Sciatic nerve (tissue), 2 donors: ENCODE measurements at regions of chr5 and their contacts with region 1.

Region 1: GRCh38 chr5:143448518-143448917 is 45.0 kb upstream of the NR3C1 start:
- DNase-seq: no peak
- ATAC-seq: no peak

Region 2: DNA sequence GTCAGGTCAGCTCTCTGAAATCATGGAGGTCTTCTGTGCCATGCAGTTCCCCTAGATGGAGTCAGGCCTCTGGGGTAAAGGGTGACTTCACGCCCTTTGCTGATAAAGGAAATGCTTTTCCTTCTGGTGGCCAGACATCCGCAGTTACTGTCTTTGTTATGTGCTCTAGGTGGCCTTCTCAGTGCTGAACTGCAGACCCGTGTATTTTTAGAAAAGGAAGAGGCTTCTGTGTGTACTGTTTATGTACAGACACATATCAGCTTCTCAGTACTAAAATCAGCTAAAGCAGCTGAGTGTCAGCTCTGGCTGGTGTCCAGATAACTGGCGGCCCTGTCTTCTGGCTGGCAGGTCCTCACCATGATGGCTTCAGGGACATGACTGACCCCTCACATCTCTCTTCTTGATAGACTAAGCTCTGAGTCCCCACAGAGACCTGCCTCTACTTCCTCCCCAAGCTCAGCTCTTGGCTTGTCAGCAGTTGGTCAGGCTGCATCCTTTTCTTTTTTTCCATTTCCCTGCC is 603.1 kb before region 1 on chr5:
- intact Hi-C with region 1: no loop called
- DNase-seq: no peak
- ATAC-seq: no peak

Region 3: DNA sequence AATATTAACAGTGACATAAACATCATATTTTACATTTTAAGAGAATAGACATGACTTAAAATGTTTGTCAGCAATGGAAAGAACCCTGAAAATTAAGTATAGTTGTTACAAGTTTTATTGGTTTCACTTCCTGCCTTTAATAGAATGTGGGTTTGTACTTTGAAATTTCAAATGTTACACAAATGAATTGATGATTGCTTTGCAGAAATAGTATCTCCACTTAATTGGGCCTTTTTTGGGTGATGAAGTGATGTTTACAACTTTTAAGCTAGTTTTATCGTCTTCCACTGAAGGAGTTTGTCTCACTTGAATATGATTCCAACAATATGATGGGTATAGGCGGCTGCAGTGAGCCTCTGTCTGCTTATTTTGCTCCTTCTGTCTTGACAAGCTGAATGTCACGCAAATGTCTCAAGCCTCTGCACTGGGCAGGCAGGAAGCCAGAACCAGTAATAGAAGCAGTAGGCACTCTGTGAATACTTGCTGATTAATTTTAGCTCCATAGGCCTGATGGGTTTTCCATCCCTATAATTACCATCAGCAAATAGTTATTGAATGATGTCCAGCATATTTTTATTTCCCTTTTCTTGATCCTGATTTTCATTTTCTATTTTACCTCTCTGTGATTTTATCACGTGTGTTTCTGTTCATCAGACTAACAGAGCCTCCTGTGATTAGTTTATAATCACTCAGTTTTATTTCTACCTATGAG is 34.4 kb before region 1 on chr5:
- intact Hi-C with region 1: loop called (anchors 2 kb)
- DNase-seq: no peak
- ATAC-seq: no peak

Region 4: GRCh38 chr5:143685246-143685802 is 236.8 kb after region 1 on chr5:
- intact Hi-C with region 1: no loop called
- DNase-seq: no peak
- ATAC-seq: no peak

Region 5: GRCh38 chr5:145246961-145247744 is 1798.6 kb after region 1 on chr5:
- intact Hi-C with region 1: loop called (anchors 10 kb)
- DNase-seq: no peak
- ATAC-seq: no peak